ENCODE measurements at regions of chr5 and their contacts with region 1.

Region 1: GRCh38 chr5:143435210-143435657 is 31.7 kb upstream of the NR3C1 start:
- DNase-seq: peak; percentile 31
- ATAC-seq: peak; percentile 82
- H3K4me3 Mint-ChIP-seq: peak overlapping the region; percentile 89
- H3K27ac Mint-ChIP-seq: peak overlapping the region; percentile 99
- H3K4me1 Mint-ChIP-seq: peaks cover 69% of the 10 kb centered on the region
- H3K27me3 Mint-ChIP-seq: no peaks in the 10 kb centered on the region
- CTCF ChIP-seq: no peak

Region 2: GRCh38 chr5:141585594-141585993 is 1849.6 kb before region 1 on chr5:
- CTCF ChIA-PET with region 1: no interaction called
- POLR2A ChIA-PET with region 1: no interaction called
- intact Hi-C with region 1: no loop called
- DNase-seq: no peak
- ATAC-seq: no peak
- H3K4me3 Mint-ChIP-seq: no peak overlapping the region
- H3K27ac Mint-ChIP-seq: no peak overlapping the region
- H3K4me1 Mint-ChIP-seq: peaks cover 8% of the 10 kb centered on the region
- H3K27me3 Mint-ChIP-seq: no peaks in the 10 kb centered on the region
- CTCF ChIP-seq: no peak

Region 3: GRCh38 chr5:143008809-143009521 is 426.3 kb before region 1 on chr5:
- CTCF ChIA-PET with region 1: interaction called, 14 read pairs
- POLR2A ChIA-PET with region 1: interaction called, 3 read pairs
- intact Hi-C with region 1: loop called (anchors 1 kb)
- DNase-seq: no peak
- ATAC-seq: peak; percentile 69
- H3K4me3 Mint-ChIP-seq: peak overlapping the region; percentile 30
- H3K27ac Mint-ChIP-seq: peak overlapping the region; percentile 80
- H3K4me1 Mint-ChIP-seq: peaks cover 55% of the 10 kb centered on the region
- H3K27me3 Mint-ChIP-seq: no peaks in the 10 kb centered on the region
- CTCF ChIP-seq: no peak

Region 4: DNA sequence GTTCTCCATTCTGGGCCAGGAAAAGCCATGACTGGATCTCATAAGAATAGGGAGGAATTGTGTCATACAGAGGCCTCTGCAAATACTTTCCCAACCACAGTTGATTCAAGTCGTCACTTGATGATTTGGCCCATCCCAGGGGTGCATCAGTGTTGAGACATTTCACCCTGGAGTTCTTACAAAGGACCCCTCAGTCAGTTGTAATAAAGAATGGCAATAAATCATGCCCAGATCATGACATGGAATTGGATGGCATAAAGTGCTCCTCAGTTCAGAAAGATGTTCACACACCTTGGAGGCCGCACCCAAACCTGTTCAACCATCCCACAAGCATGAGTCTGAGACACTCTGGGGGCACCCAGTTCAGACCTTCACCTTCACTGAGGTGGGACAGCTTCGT is 199.8 kb before region 1 on chr5:
- CTCF ChIA-PET with region 1: no interaction called
- POLR2A ChIA-PET with region 1: no interaction called
- intact Hi-C with region 1: no loop called
- DNase-seq: no peak
- ATAC-seq: no peak
- H3K4me3 Mint-ChIP-seq: no peak overlapping the region
- H3K27ac Mint-ChIP-seq: no peak overlapping the region
- H3K4me1 Mint-ChIP-seq: peaks cover 6% of the 10 kb centered on the region
- H3K27me3 Mint-ChIP-seq: peaks cover 1% of the 10 kb centered on the region
- CTCF ChIP-seq: no peak

Region 5: DNA sequence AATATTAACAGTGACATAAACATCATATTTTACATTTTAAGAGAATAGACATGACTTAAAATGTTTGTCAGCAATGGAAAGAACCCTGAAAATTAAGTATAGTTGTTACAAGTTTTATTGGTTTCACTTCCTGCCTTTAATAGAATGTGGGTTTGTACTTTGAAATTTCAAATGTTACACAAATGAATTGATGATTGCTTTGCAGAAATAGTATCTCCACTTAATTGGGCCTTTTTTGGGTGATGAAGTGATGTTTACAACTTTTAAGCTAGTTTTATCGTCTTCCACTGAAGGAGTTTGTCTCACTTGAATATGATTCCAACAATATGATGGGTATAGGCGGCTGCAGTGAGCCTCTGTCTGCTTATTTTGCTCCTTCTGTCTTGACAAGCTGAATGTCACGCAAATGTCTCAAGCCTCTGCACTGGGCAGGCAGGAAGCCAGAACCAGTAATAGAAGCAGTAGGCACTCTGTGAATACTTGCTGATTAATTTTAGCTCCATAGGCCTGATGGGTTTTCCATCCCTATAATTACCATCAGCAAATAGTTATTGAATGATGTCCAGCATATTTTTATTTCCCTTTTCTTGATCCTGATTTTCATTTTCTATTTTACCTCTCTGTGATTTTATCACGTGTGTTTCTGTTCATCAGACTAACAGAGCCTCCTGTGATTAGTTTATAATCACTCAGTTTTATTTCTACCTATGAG is 21.1 kb before region 1 on chr5:
- CTCF ChIA-PET with region 1: no interaction called
- POLR2A ChIA-PET with region 1: interaction called, 19 read pairs
- intact Hi-C with region 1: no loop called
- DNase-seq: no peak
- ATAC-seq: peak; percentile 85
- H3K4me3 Mint-ChIP-seq: peak overlapping the region; percentile 29
- H3K27ac Mint-ChIP-seq: peak overlapping the region; percentile 64
- H3K4me1 Mint-ChIP-seq: peaks cover 40% of the 10 kb centered on the region
- H3K27me3 Mint-ChIP-seq: no peaks in the 10 kb centered on the region
- CTCF ChIP-seq: no peak

Region 6: DNA sequence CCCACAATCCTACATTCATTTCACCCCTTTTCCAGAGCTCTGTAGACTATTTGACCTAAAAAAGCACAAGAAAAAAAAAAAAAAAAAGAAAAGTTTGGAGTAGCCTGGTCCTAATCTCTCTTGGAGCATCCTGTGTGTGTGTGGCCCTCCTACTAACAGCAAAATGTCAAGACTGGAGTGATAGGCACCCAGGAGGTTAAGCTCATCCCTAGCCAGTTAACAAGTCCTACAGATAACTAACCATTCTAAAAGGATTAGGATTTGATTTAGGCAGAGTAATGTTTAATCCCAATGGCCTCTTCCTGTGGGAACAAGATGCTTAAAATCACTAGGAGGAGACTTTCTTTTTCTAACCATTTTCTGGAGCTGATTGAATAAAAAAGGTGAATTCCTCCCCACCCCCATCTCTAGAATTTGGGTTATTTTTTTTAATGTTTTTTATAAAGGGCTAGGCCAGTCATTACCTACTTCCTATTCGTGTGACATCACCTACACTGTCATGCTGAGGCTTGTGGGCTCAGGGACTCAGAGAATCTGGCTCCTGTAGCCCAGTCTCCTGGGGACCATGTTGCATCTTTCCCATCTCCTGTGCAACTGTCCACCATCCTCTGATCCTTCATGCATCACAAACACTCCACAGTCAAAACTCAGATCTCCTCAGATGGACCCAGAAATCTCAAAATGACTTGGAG is 11.4 kb after region 1 on chr5:
- CTCF ChIA-PET with region 1: interaction called, 3 read pairs
- POLR2A ChIA-PET with region 1: interaction called, 12 read pairs
- intact Hi-C with region 1: no loop called
- DNase-seq: no peak
- ATAC-seq: no peak
- H3K4me3 Mint-ChIP-seq: no peak overlapping the region
- H3K27ac Mint-ChIP-seq: no peak overlapping the region
- H3K4me1 Mint-ChIP-seq: peaks cover 12% of the 10 kb centered on the region
- H3K27me3 Mint-ChIP-seq: no peaks in the 10 kb centered on the region
- CTCF ChIP-seq: no peak

Region 7: DNA sequence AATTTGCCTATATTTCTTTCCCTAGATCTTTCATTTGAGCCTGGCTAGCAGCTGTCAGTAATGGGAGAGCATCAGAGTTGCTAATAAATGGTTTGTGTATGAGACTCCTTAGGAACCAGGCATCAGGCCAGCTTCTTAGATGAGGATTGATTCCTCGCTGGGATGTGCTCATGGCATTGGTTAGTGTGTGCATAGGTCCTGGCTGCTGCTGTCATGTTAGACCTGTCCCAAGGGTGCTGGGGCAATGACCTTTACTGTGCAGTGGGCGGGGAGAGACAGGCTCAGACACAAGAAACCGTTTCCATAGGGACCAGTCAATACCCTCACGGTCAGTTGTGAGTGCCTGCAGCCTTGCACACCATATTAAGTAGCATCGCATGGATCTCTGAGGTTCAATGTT is 80.6 kb after region 1 on chr5:
- CTCF ChIA-PET with region 1: no interaction called
- POLR2A ChIA-PET with region 1: no interaction called
- intact Hi-C with region 1: loop called (anchors 5 kb)
- DNase-seq: no peak
- ATAC-seq: peak; percentile 56
- H3K4me3 Mint-ChIP-seq: no peak overlapping the region
- H3K27ac Mint-ChIP-seq: no peak overlapping the region
- H3K4me1 Mint-ChIP-seq: peaks cover 15% of the 10 kb centered on the region
- H3K27me3 Mint-ChIP-seq: no peaks in the 10 kb centered on the region
- CTCF ChIP-seq: no peak

Region 8: DNA sequence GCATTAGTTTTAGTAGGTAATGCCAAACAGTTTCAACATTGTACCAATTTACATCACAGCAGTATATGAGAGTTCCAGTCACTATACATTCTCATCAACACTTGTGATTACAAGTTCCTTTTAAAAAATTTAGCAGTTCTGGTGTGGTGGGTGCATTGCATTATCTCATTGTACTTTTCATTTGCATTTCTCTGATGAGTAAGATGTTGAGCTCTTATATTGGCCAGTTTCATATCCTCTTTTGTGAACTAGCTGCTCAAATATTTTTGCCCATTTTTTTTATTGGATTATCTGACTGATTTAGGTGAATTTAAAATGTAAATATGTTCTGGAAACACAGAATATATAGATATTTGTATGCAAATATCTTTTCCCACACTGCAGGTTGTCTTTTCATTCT is 129.2 kb after region 1 on chr5:
- CTCF ChIA-PET with region 1: interaction called, 3 read pairs
- POLR2A ChIA-PET with region 1: interaction called, 4 read pairs
- intact Hi-C with region 1: loop called (anchors 2 kb)
- DNase-seq: no peak
- ATAC-seq: peak; percentile 91
- H3K4me3 Mint-ChIP-seq: peak overlapping the region; percentile 46
- H3K27ac Mint-ChIP-seq: peak overlapping the region; percentile 53
- H3K4me1 Mint-ChIP-seq: peaks cover 25% of the 10 kb centered on the region
- H3K27me3 Mint-ChIP-seq: no peaks in the 10 kb centered on the region
- CTCF ChIP-seq: no peak

Region 9: GRCh38 chr5:143582869-143583268 is 147.6 kb after region 1 on chr5:
- CTCF ChIA-PET with region 1: no interaction called
- POLR2A ChIA-PET with region 1: no interaction called
- intact Hi-C with region 1: loop called (anchors 5 kb)
- DNase-seq: no peak
- ATAC-seq: peak; percentile 34
- H3K4me3 Mint-ChIP-seq: peak overlapping the region; percentile 2
- H3K27ac Mint-ChIP-seq: peak overlapping the region; percentile 38
- H3K4me1 Mint-ChIP-seq: peaks cover 36% of the 10 kb centered on the region
- H3K27me3 Mint-ChIP-seq: no peaks in the 10 kb centered on the region
- CTCF ChIP-seq: no peak

Measured in activated B cell treated with CpG ODN at 0.5 μM for 24 hours (primary cell).